PC-9 (cell line): ENCODE measurements at regions of chr9 and their contacts with region 1.

Region 1: GRCh38 chr9:72364679-72365524 is at the start of gene ZFAND5:
- DNase-seq: peak; percentile 91 to 98
- H3K4me3 ChIP-seq: peak within 1 kb of the TSS; percentile 96
- H3K27ac ChIP-seq: peak within 1 kb of the TSS; percentile 100
- H3K4me1 ChIP-seq: peaks cover 38% of the 10 kb centered on the region
- H3K27me3 ChIP-seq: no peaks in the 10 kb centered on the region
- CTCF ChIP-seq: no peak
- total RNA-seq, gene ZFAND5: 217 and 227 TPM in 2 replicates

Region 2: DNA sequence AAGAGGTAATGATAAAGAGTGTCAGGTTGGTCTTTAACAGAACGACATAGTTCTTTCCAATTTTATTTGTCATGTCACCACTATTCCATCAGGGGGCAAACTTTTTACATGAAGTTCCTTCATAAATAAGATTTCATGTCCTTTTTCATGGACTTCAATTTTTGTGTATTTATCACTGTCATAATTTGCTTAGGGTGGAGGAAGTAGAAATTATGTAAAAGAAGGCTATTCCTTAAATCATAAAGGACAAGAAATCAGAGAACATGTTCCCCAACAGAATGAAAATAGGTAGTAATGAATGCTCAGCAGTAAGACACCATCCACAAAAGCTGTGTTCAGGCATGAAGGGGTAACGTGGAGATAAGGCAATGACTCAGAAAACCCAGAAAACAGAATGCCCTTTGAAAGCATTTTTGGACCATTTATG is 72.6 kb before region 1 on chr9:
- CTCF ChIA-PET with region 1: interaction called, 6 read pairs
- POLR2A ChIA-PET with region 1: interaction called, 5 read pairs
- intact Hi-C with region 1: loop called (anchors 2 kb)
- DNase-seq: no peak
- H3K4me3 ChIP-seq: no peak overlapping the region
- H3K27ac ChIP-seq: no peak overlapping the region
- H3K4me1 ChIP-seq: peaks cover 26% of the 10 kb centered on the region
- H3K27me3 ChIP-seq: no peaks in the 10 kb centered on the region
- CTCF ChIP-seq: peak; percentile 71

Region 3: DNA sequence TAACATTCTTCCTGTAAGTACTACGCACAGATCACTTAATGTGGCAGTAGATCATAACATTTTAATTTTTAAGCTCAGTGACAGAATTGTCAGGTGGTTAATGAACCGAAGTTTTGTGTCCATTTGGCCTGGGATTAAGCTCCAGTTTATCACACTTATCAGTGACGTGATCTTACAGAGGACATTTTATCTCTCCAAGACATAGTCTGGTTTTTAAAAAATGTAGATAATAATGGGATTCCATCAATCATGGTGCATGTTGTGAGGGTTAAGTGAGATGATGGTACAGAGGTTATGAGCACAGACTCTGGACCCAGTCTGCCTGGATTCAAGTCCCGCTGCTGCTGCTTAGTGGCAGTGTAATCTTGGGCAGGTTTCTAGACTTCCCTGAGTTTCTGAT is 66.1 kb after region 1 on chr9:
- CTCF ChIA-PET with region 1: no interaction called
- POLR2A ChIA-PET with region 1: interaction called, 14 read pairs
- intact Hi-C with region 1: loop called (anchors 2 kb)
- DNase-seq: no peak
- H3K4me3 ChIP-seq: no peak overlapping the region
- H3K27ac ChIP-seq: no peak overlapping the region
- H3K4me1 ChIP-seq: peaks cover 15% of the 10 kb centered on the region
- H3K27me3 ChIP-seq: no peaks in the 10 kb centered on the region
- CTCF ChIP-seq: no peak

Region 4: GRCh38 chr9:72478966-72479365 is 114.1 kb after region 1 on chr9:
- CTCF ChIA-PET with region 1: interaction called, 6 read pairs
- POLR2A ChIA-PET with region 1: interaction called, 32 read pairs
- intact Hi-C with region 1: loop called (anchors 1 kb)
- DNase-seq: no peak
- H3K4me3 ChIP-seq: no peak overlapping the region
- H3K27ac ChIP-seq: peak overlapping the region; percentile 94
- H3K4me1 ChIP-seq: peaks cover 47% of the 10 kb centered on the region
- H3K27me3 ChIP-seq: no peaks in the 10 kb centered on the region
- CTCF ChIP-seq: no peak

Region 5: DNA sequence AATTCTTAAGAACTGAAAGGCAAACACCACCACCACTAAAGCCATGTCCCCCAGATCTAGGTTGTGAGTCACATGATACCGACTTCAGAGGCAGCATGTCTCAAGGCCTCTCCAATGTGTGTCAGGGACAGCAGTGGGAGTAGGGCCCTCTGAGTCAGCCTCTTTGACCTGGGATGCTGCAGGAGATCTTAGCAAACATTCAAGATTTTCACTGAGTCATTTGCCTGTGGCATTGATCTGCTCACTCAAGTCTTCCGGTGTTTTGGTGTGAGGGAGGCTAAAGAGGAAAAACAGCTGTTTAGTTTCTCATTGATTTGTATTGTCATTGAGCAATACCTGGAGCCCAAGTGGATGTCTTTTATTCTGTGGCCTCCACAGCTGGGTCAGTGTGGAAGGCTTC is 192.6 kb after region 1 on chr9:
- CTCF ChIA-PET with region 1: no interaction called
- POLR2A ChIA-PET with region 1: interaction called, 15 read pairs
- intact Hi-C with region 1: loop called (anchors 1 kb)
- DNase-seq: peak; percentile 77 to 99
- H3K4me3 ChIP-seq: no peak overlapping the region
- H3K27ac ChIP-seq: peak overlapping the region; percentile 92
- H3K4me1 ChIP-seq: peaks cover 80% of the 10 kb centered on the region
- H3K27me3 ChIP-seq: no peaks in the 10 kb centered on the region
- CTCF ChIP-seq: no peak

Region 6: DNA sequence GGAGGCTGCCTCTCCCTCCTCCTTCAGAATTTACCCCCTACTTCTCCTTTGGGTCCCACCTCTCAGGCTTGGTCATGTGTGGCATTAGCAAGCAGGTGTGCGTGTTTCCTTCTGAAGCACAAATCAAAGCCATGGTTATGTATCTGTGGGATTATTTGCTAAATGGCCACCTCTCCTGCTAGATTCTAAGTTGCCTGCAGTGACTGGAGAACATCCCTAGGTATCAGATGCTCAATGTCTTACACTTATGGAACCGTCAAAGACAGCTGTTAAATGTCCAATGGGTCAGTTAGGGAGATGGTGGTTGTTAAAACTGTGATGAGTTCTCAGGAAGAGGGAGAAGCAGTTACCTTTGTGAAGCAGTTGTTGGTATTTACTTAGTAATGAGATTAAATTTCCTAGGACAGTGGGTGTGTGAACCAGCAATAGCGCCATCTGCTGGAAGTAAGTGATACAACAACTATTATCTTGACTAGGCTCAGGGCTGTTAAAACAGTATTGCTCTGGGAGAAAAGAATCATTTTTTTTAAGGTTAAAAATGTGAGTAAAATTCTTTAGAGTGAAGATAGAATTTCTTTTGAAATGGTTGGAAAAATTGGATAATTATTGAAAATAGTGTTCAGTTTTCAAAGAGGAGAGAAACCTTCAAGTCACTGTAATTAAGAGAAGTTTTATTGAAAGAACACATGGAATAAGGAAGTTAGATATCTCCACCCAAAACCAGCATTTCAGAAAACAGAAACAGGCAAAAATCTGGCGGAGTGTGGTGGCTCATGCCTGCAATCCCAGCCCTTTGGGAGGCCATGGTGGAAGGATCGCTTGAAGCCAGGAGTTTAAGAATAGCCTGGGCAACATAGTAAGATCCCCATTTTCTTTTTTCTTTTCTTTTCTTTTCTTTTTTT is 227.9 kb after region 1 on chr9:
- CTCF ChIA-PET with region 1: no interaction called
- POLR2A ChIA-PET with region 1: no interaction called
- intact Hi-C with region 1: loop called (anchors 1 kb)
- DNase-seq: peak; percentile 37 to 67
- H3K4me3 ChIP-seq: no peak overlapping the region
- H3K27ac ChIP-seq: 0 out of 2 replicates have a peak overlapping the region, but pooled peaks have one; percentile 31
- H3K4me1 ChIP-seq: peaks cover 27% of the 10 kb centered on the region
- H3K27me3 ChIP-seq: no peaks in the 10 kb centered on the region
- CTCF ChIP-seq: peak; percentile 96

Region 7: DNA sequence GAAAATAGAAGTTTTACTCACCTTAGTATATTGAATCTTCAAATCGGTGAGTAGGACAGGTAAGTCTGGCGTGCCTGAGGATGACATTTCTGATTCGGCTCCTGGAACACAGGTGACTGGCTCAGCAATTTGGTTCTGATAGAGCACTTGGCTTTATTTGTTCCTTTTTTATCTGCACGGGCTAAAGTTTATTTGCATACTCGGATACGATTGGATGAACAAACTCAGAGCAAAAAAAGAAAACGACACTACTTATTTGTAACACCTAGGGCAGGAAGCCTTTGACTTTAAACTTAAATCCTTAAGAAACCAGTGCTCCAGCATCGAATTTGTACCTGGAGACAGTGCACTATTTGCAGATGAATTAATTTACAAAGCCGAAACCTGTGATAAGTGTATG is 588.0 kb after region 1 on chr9 and contains the start of gene ALDH1A1:
- CTCF ChIA-PET with region 1: no interaction called
- POLR2A ChIA-PET with region 1: interaction called, 10 read pairs
- intact Hi-C with region 1: no loop called
- DNase-seq: peak in 1 of 2 experiments; percentile 32
- H3K4me3 ChIP-seq: no peak within 1 kb of the TSS
- H3K27ac ChIP-seq: no peak within 1 kb of the TSS
- H3K4me1 ChIP-seq: peaks cover 11% of the 10 kb centered on the region; the same call in 1 of the 2 replicates
- H3K27me3 ChIP-seq: no peaks in the 10 kb centered on the region
- CTCF ChIP-seq: no peak
- total RNA-seq, gene ALDH1A1: 2.3 and 3.7 TPM in 2 replicates

Region 8: GRCh38 chr9:73595036-73595545 is 1230.2 kb after region 1 on chr9:
- CTCF ChIA-PET with region 1: no interaction called
- POLR2A ChIA-PET with region 1: no interaction called
- intact Hi-C with region 1: no loop called
- DNase-seq: no peak
- H3K4me3 ChIP-seq: no peak overlapping the region
- H3K27ac ChIP-seq: no peak overlapping the region
- H3K4me1 ChIP-seq: no peaks in the 10 kb centered on the region
- H3K27me3 ChIP-seq: no peaks in the 10 kb centered on the region
- CTCF ChIP-seq: no peak